ENCODE measurements at regions of chr18 and their contacts with region 1.

Region 1: DNA sequence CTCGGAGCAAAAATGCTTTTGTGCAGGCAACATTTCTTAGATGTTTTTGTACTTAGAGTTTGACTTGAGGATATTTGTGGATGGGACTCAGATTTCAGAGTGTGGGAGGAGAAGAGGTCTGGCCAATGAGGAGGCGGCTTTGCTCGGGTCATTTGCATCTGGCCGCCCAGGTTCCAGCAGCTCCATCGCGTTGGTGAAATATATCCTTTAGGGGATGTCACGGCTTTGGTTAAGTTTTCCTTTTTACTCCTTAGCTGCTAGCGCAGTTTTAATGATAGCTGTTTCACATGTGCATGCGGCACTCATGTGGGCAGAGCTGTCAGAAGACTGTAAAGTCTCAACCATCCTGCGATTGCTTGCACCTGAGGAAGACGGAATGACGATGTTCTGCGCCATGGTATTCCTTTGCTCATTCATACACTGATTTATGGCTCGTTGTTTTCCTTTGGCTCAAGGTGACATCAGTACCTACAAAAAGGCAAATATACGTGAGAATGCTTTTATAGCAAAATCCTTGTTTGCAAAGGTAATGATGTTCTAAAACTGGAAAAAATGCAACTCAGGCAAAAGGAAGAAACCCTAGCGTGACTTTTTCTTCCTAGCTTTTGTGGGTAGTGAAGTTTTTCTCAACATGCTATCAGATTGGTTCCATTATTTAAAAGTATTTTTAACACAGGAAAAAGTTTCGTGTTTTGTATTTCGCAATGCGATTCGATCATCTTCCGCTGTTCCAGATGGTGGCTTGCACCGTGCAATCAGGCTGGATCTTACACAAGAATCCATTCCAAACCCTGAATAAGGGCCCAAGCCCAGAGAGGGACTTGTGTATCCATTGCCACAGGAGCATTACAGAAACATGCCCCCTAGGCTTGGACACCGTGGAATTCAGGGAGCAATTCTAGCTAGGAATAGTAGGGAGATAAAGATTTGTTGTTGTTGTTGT is 70.5 kb upstream of the ZNF516 start:
- DNase-seq: peak; percentile 94
- H3K4me3 ChIP-seq: peak overlapping the region; percentile 32
- H3K27ac ChIP-seq: peak overlapping the region; percentile 72
- H3K4me1 ChIP-seq: peaks cover 17% of the 10 kb centered on the region
- H3K27me3 ChIP-seq: no peaks in the 10 kb centered on the region
- CTCF ChIP-seq: no peak

Region 2: GRCh38 chr18:75687626-75688025 is 877.9 kb before region 1 on chr18:
- CTCF ChIA-PET with region 1: no interaction called
- POLR2A ChIA-PET with region 1: no interaction called
- intact Hi-C with region 1: no loop called
- DNase-seq: no peak
- H3K4me3 ChIP-seq: no peak overlapping the region
- H3K27ac ChIP-seq: no peak overlapping the region
- H3K4me1 ChIP-seq: no peaks in the 10 kb centered on the region
- H3K27me3 ChIP-seq: peaks cover 18% of the 10 kb centered on the region
- CTCF ChIP-seq: no peak

Region 3: DNA sequence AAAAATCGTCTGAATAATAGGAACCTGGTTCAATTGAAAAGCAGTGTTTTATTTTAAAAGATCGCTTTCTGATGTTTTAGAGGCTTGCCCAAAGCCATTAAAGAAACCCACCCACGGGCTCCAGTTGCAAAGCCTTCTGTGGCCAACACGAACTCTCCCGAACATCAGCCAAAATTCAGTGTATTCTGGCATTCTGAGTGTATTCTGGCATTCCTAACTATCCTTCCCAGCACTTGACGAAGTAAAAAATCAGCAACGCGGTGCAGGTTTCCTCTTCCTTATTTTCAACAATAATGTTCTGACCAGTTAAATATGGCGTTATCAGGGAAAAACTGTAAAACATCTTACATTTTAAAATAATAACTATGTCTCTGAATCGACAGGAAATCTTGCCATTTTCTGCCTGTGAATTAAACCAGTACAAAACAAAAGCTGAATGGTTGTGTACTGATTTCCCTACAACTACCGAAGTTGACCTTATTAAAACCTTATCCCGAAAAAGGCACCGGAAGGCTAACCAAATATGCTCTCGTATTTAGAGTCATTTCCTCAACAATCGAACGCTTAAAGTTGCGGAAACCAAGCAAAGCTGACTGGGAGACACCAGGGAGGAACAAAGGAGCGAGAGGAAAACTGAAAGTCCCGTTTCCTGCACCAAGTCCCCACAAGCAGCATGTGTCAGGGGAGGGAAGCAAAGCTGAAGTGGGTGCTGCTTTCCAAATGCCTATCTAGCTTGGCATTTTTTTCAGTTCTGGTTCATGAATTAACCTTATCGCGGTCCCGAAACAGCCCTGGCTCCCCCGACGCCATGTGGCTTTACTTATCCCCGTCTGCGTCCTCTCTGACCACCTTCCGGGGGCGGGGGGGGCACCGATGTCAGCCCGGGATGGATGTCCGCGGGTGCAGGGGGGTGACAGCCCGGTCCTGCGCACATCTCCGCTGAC is 114.8 kb before region 1 on chr18:
- CTCF ChIA-PET with region 1: no interaction called
- POLR2A ChIA-PET with region 1: no interaction called
- intact Hi-C with region 1: loop called (anchors 10 kb)
- DNase-seq: peak; percentile 71
- H3K4me3 ChIP-seq: peak overlapping the region; percentile 50
- H3K27ac ChIP-seq: peak overlapping the region; percentile 86
- H3K4me1 ChIP-seq: peaks cover 34% of the 10 kb centered on the region
- H3K27me3 ChIP-seq: no peaks in the 10 kb centered on the region
- CTCF ChIP-seq: no peak

Measured in A673 (cell line).